ENCODE measurements at regions of chr19 and their contacts with region 1.

Region 1: GRCh38 chr19:19540715-19541440 is 2.8 kb downstream of the CILP2 start:
- DNase-seq: peak; percentile 49 to 79 (median 69)
- ATAC-seq: peak; percentile 86
- H3K4me3 ChIP-seq: peak overlapping the region; percentile 50
- H3K4me3 Mint-ChIP-seq: peak overlapping the region; percentile 58 to 85 (median 77)
- H3K27ac ChIP-seq: no peak overlapping the region
- H3K27ac Mint-ChIP-seq: peak overlapping the region in 3 of 9 donors; percentile 43 to 81 (median 66)
- H3K4me1 ChIP-seq: peaks cover 15 to 25% of the 10 kb centered on the region in 2 donors
- H3K4me1 Mint-ChIP-seq: peaks cover 8 to 36% (median 29%) of the 10 kb centered on the region in 7 donors
- H3K27me3 ChIP-seq: no peaks in the 10 kb centered on the region
- H3K27me3 Mint-ChIP-seq: peaks cover 0 to 31% (median 4%) of the 10 kb centered on the region in 5 donors

Region 2: DNA sequence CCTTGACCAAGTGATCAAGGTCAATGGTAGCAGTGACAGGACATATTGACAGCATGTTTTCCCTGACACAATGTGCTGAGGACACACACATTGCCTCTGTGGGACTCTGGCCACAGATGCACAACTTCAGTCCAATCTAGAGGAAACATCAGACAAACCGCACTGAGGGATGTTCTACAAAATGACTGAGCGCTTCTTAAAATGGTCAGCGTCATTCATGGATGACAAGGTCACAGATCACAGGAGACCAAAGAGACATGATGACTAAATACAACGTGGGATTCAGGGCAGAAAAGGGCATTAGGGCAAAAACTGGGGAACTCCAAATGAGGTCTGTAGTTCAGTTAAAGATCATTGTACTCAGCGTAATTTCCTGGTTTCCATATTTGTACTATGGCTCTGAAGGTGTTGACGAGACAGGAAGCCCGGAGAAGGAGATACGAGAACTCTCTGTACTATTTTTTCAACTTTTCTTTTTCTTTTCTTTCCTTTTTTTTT is 57.0 kb after region 1 on chr19:
- CTCF ChIA-PET with region 1: no interaction called
- POLR2A ChIA-PET with region 1: no interaction called
- intact Hi-C with region 1: loop called in 1 of 2 experiments (anchors 2 kb)
- DNase-seq: peak in 8 of 9 donors; percentile 54 to 90 (median 84)
- ATAC-seq: peak; percentile 87
- H3K4me3 ChIP-seq: peak overlapping the region; percentile 52
- H3K4me3 Mint-ChIP-seq: peak overlapping the region; percentile 61 to 85 (median 74)
- H3K27ac ChIP-seq: peak overlapping the region; percentile 96
- H3K27ac Mint-ChIP-seq: peak overlapping the region; percentile 90 to 99 (median 97)
- H3K4me1 ChIP-seq: peaks cover 53 to 54% of the 10 kb centered on the region in 2 donors
- H3K4me1 Mint-ChIP-seq: peaks cover 29 to 75% (median 66%) of the 10 kb centered on the region in 7 donors
- H3K27me3 ChIP-seq: no peaks in the 10 kb centered on the region
- H3K27me3 Mint-ChIP-seq: no peaks in the 10 kb centered on the region

Region 3: DNA sequence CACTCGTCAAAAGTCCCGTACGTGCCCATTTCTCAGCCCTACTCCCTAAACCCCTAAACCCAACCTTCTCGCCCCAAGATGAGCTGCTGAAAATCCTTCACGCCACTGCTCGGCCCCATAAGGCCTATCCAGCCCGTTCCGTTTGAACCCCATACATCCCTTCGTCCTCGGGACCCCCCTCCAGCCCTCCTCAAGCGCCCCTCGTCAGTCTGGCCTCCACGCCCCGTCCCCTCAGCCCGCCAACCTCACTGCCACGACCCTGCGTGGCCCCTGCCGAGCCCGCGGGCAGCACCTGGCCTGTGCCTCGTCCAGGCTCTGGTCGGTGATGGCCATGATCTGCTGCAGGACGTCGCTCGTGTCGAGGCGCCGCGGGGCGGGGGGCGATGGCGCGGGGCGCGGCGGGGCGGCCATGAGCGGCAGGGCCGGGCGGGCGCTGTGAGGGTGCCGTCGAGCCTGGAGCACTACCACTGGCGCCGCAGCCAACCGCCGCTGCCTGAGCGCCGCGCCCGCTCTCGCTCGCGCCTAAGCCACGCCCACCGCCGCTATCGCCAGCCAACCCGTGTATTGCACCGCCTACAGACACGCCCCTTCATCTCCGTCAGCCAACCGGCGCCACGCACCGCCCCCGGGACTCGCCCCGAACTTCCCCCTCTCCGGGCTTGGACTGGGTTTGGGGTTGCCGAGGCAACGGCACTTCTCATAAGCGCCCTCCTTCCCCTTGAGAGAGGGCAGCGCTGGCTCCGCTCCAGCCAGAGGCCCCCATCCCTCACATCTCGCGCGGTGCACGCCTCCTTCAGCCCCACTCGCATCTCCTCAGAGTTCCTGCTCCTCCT is 77.6 kb after region 1 on chr19 and contains the start of gene PBX4:
- CTCF ChIA-PET with region 1: no interaction called
- POLR2A ChIA-PET with region 1: no interaction called
- intact Hi-C with region 1: loop called in 1 of 2 experiments (anchors 1 kb)
- DNase-seq: peak; percentile 97 to 99 (median 99)
- ATAC-seq: peak; percentile 99
- H3K4me3 ChIP-seq: peak within 1 kb of the TSS; percentile 86
- H3K4me3 Mint-ChIP-seq: peak within 1 kb of the TSS; percentile 79 to 99 (median 90)
- H3K27ac ChIP-seq: peak within 1 kb of the TSS; percentile 82
- H3K27ac Mint-ChIP-seq: peak within 1 kb of the TSS; percentile 80 to 98 (median 94)
- H3K4me1 ChIP-seq: peaks cover 16 to 23% of the 10 kb centered on the region in 2 donors
- H3K4me1 Mint-ChIP-seq: peaks cover 34 to 50% (median 45%) of the 10 kb centered on the region in 7 donors
- H3K27me3 ChIP-seq: no peaks in the 10 kb centered on the region
- H3K27me3 Mint-ChIP-seq: no peaks in the 10 kb centered on the region
- total RNA-seq, gene PBX4: 22.6 to 42.7 (median 42.0) TPM

Region 4: GRCh38 chr19:19637523-19638251 is 96.8 kb after region 1 on chr19:
- CTCF ChIA-PET with region 1: no interaction called
- POLR2A ChIA-PET with region 1: no interaction called
- intact Hi-C with region 1: no loop called
- DNase-seq: no peak
- ATAC-seq: peak; percentile 30
- H3K4me3 ChIP-seq: no peak overlapping the region
- H3K4me3 Mint-ChIP-seq: no peak overlapping the region
- H3K27ac ChIP-seq: no peak overlapping the region
- H3K27ac Mint-ChIP-seq: peak overlapping the region in 1 of 9 donors; percentile 56
- H3K4me1 ChIP-seq: peaks cover 7 to 14% of the 10 kb centered on the region in 2 donors
- H3K4me1 Mint-ChIP-seq: peaks cover 20 to 38% (median 26%) of the 10 kb centered on the region in 7 donors
- H3K27me3 ChIP-seq: no peaks in the 10 kb centered on the region
- H3K27me3 Mint-ChIP-seq: no peaks in the 10 kb centered on the region

Region 5: DNA sequence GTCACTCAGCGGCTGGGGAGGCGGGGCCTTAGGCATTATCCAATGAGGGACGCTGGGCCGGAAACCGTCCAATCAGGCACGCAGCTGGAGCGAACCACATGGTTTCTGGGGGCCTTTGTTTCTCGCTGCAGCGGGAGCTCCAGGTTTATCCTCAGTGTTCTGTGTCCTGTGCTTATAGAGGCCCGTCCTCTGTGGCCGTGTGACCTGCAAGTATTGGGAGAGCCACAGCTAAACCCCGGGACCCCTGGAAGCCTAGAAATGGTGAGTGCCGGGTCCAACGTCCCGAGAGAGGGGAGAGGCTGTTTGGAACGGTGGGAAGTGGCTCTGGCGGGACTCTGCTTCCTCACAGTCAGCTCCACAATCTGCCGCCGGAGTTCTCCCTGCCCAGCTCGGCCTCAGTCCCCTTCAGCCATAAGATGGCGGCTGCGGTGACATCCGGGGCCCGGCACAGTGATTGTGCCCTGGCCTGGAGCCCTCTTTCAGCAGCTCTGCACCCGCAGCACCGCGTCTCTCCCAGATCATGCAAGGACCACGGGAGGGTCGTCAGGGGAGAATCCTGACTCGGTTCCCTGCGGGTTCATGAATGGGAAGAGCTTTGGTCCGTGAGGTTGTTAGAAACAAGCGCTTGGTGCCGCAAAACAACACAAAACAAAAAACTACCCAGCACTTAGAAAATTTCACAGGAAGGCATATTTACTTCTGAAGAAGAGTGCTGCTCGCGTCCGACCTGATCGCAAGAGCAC is 325.0 kb after region 1 on chr19 and contains the start of gene ZNF253:
- CTCF ChIA-PET with region 1: no interaction called
- POLR2A ChIA-PET with region 1: no interaction called
- intact Hi-C with region 1: loop called in 1 of 2 experiments (anchors 5 kb)
- DNase-seq: peak; percentile 76 to 95 (median 92)
- ATAC-seq: peak; percentile 95
- H3K4me3 ChIP-seq: peak within 1 kb of the TSS; percentile 93
- H3K4me3 Mint-ChIP-seq: peak within 1 kb of the TSS; percentile 98 to 100 (median 100)
- H3K27ac ChIP-seq: peak within 1 kb of the TSS; percentile 86
- H3K27ac Mint-ChIP-seq: peak within 1 kb of the TSS; percentile 96 to 100 (median 99)
- H3K4me1 ChIP-seq: peaks cover 7 to 13% of the 10 kb centered on the region in 2 donors
- H3K4me1 Mint-ChIP-seq: peaks cover 21 to 41% (median 31%) of the 10 kb centered on the region in 7 donors
- H3K27me3 ChIP-seq: no peaks in the 10 kb centered on the region
- H3K27me3 Mint-ChIP-seq: no peaks in the 10 kb centered on the region
- total RNA-seq, gene ZNF253: 9.5 to 33.8 (median 14.8) TPM

Region 6: DNA sequence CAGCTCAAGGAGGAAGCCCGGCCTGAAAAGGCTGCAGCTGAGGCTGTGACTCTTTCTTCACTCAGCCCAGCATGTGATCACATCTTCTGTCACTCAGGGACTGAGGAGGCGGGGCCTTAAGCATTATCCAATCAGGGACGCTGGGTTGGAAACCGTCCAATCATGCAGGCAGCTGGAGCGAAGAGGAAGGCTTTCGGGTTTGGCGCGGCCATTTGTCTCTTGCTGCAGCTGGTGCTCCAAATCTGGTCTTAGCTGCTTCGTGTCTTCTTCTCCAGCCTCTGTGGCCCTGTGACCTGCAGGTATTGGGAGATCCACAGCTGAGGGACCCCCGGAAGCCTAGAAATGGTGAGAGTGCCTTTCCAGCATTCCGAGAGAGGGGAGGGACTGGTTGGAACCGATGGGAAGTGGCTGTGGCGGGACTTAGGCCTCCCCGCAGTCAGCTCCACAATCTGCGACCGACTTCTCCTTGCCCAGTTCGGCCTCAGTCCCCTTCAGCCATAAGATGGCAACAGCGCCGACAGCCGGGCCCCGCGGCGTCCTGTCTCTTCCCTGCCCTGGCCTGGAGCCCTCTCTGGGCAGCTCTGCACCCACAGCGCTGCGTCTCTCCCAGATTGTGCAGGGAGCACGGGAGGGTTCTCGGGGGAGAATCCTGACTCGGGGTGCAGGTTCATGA is 537.0 kb after region 1 on chr19 and contains the start of gene ZNF90:
- CTCF ChIA-PET with region 1: no interaction called
- POLR2A ChIA-PET with region 1: no interaction called
- intact Hi-C with region 1: no loop called
- DNase-seq: peak; percentile 57 to 90 (median 84)
- ATAC-seq: peak; percentile 99
- H3K4me3 ChIP-seq: peak within 1 kb of the TSS; percentile 86
- H3K4me3 Mint-ChIP-seq: peak within 1 kb of the TSS; percentile 86 to 89 (median 88)
- H3K27ac ChIP-seq: no peak within 1 kb of the TSS
- H3K27ac Mint-ChIP-seq: peak within 1 kb of the TSS; percentile 31 to 82 (median 54)
- H3K4me1 ChIP-seq: peaks cover 4 to 8% of the 10 kb centered on the region in 2 donors
- H3K4me1 Mint-ChIP-seq: peaks cover 0 to 27% (median 14%) of the 10 kb centered on the region in 7 donors
- H3K27me3 ChIP-seq: no peaks in the 10 kb centered on the region
- H3K27me3 Mint-ChIP-seq: no peaks in the 10 kb centered on the region
- total RNA-seq, gene ZNF90: 3.4 to 7.7 (median 4.5) TPM

Measured in naive thymus-derived CD4-positive, alpha-beta T cell (primary cell).